ENCODE measurements at regions of chr7 and their contacts with region 1.

Region 1: GRCh38 chr7:103412151-103412550 is 33.9 kb downstream of the SLC26A5 start:
- DNase-seq: no peak
- ATAC-seq: no peak
- H3K4me3 ChIP-seq: no peak overlapping the region
- H3K27ac ChIP-seq: no peak overlapping the region
- H3K4me1 ChIP-seq: no peaks in the 10 kb centered on the region
- H3K27me3 ChIP-seq: 0 out of 2 replicates have a peak, but pooled peaks cover 4% of the 10 kb centered on the region
- CTCF ChIP-seq: no peak
- POLR2A ChIP-seq: no peak
- RAD21 ChIP-seq: no peak

Region 2: GRCh38 chr7:102897856-102898531 is 514.2 kb before region 1 on chr7:
- CTCF ChIA-PET with region 1: no interaction called
- POLR2A ChIA-PET with region 1: no interaction called
- RAD21 ChIA-PET with region 1: no interaction called
- intact Hi-C with region 1: no loop called
- DNase-seq: no peak
- ATAC-seq: no peak
- H3K4me3 ChIP-seq: no peak overlapping the region
- H3K27ac ChIP-seq: no peak overlapping the region
- H3K4me1 ChIP-seq: no peaks in the 10 kb centered on the region
- H3K27me3 ChIP-seq: no peaks in the 10 kb centered on the region
- CTCF ChIP-seq: no peak
- POLR2A ChIP-seq: no peak
- RAD21 ChIP-seq: no peak

Region 3: DNA sequence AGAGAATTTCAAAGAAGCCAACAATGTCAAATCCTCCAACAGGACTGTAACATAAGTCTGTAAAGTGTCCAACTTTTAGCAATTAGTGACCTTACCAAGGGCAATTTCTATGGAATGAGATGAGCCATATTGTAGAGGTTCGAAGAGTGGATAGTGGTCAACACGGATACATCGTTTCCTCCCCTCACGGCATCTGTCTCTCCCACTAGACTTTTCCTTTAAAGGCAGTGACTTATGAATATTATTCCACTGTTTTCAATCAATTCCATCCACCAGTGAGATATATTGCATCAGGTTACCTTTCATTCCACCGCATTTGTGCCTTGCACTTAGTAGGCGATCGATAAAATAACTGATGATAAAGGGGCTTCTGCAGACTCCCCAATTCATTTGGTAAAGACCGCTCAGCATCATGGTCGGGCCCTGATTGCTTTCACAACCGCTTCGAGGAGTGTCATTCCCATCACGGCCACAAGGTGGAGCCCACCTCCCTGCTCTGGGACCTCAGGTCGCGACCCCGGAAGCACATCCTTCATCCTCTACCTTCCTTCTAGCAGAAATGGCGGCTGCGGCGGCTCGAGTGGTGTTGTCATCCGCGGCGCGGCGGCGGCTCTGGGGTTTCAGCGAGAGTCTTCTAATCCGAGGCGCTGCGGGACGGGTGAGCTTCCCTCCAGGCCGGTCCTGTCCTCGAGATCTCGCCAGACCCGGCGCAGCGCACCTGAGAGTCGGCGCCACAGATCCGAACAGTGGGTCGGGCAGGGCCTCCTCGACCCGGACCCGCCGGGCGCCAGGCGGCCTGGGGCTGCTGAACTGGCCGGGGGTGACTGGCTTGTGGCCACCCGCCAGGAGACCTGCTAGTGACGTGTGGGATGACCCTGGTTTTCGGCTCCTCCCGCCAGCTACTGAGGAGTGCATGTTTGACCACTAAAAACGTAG is 115.0 kb before region 1 on chr7 and contains the start of gene PMPCB:
- CTCF ChIA-PET with region 1: interaction called, 8 read pairs
- POLR2A ChIA-PET with region 1: no interaction called
- RAD21 ChIA-PET with region 1: no interaction called
- intact Hi-C with region 1: loop called (anchors 1 kb)
- DNase-seq: peak; percentile 84
- ATAC-seq: peak; percentile 91
- H3K4me3 ChIP-seq: peak within 1 kb of the TSS; percentile 71 to 85
- H3K27ac ChIP-seq: peak within 1 kb of the TSS; percentile 58
- H3K4me1 ChIP-seq: peaks cover 6 to 14% of the 10 kb centered on the region in 2 experiments; a peak in 3 of 4 replicates
- H3K27me3 ChIP-seq: no peaks in the 10 kb centered on the region
- CTCF ChIP-seq: peak; percentile 74 to 92 (median 88)
- POLR2A ChIP-seq: no peak
- RAD21 ChIP-seq: peak; percentile 86
- total RNA-seq, gene PMPCB: 73.9 TPM

Region 4: GRCh38 chr7:103447073-103447951 is 35.2 kb after region 1 on chr7:
- CTCF ChIA-PET with region 1: no interaction called
- POLR2A ChIA-PET with region 1: no interaction called
- RAD21 ChIA-PET with region 1: no interaction called
- intact Hi-C with region 1: no loop called
- DNase-seq: peak; percentile 37
- ATAC-seq: peak; percentile 79
- H3K4me3 ChIP-seq: no peak overlapping the region
- H3K27ac ChIP-seq: no peak overlapping the region
- H3K4me1 ChIP-seq: peaks cover 0 to 14% of the 10 kb centered on the region in 2 experiments; a peak in 3 of 4 replicates
- H3K27me3 ChIP-seq: peaks cover 35% of the 10 kb centered on the region
- CTCF ChIP-seq: peak; percentile 41 to 87 (median 80)
- POLR2A ChIP-seq: no peak
- RAD21 ChIP-seq: peak; percentile 82

Measured in HCT116 (cell line).